MCF 10A (cell line): ENCODE measurements at regions of chr2 and their contacts with region 1.

Region 1: GRCh38 chr2:189096769-189097447 is 82.7 kb downstream of the COL5A2 start:
- DNase-seq: peak; percentile 42
- H3K4me3 Mint-ChIP-seq: no peak overlapping the region
- H3K27ac Mint-ChIP-seq: no peak overlapping the region
- H3K4me1 Mint-ChIP-seq: peaks cover 15% of the 10 kb centered on the region
- H3K27me3 Mint-ChIP-seq: no peaks in the 10 kb centered on the region
- CTCF ChIP-seq: no peak

Region 2: GRCh38 chr2:188884046-188884445 is 212.9 kb before region 1 on chr2:
- CTCF ChIA-PET with region 1: no interaction called
- POLR2A ChIA-PET with region 1: no interaction called
- intact Hi-C with region 1: no loop called
- DNase-seq: peak; percentile 25
- H3K4me3 Mint-ChIP-seq: no peak overlapping the region
- H3K27ac Mint-ChIP-seq: no peak overlapping the region
- H3K4me1 Mint-ChIP-seq: no peaks in the 10 kb centered on the region
- H3K27me3 Mint-ChIP-seq: no peaks in the 10 kb centered on the region
- CTCF ChIP-seq: no peak

Region 3: DNA sequence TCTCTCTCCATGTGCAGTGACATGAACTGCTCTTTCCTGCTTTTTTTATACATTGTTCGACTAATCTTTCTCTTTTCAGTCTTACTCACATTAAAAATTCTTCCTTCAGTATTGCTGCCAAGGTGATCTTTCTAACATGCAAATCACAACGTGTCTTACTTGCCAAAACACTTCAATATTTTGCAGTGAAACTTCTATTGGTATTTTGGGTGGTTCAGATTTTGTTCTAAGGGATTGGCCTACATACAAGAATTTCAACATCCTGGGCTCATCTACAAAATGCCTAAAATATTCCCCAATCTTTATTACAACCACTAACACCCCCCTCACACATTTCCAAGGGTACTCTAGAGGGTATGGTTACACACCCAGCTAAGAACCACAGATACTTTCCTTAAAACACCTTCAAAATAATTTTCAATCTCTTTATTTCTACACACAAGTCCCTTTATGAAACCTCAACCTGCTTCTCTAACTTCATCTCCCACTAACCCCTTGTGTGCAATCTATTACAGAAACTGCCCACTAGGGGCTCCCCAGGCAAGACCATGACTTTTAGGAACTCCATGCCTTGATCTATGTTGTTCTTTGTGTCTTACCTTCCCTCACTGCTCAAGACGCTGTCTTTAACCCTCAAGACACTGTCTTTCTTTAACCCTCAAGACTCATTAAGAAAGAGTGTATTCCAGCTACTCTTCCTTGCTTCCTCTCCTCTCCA is 71.8 kb before region 1 on chr2:
- CTCF ChIA-PET with region 1: no interaction called
- POLR2A ChIA-PET with region 1: no interaction called
- intact Hi-C with region 1: no loop called
- DNase-seq: peak; percentile 4
- H3K4me3 Mint-ChIP-seq: no peak overlapping the region
- H3K27ac Mint-ChIP-seq: peak overlapping the region; percentile 8
- H3K4me1 Mint-ChIP-seq: no peaks in the 10 kb centered on the region
- H3K27me3 Mint-ChIP-seq: no peaks in the 10 kb centered on the region
- CTCF ChIP-seq: peak; percentile 28

Region 4: GRCh38 chr2:189072036-189072435 is 24.9 kb before region 1 on chr2:
- CTCF ChIA-PET with region 1: interaction called, 11 read pairs
- POLR2A ChIA-PET with region 1: no interaction called
- intact Hi-C with region 1: no loop called
- DNase-seq: no peak
- H3K4me3 Mint-ChIP-seq: no peak overlapping the region
- H3K27ac Mint-ChIP-seq: no peak overlapping the region
- H3K4me1 Mint-ChIP-seq: no peaks in the 10 kb centered on the region
- H3K27me3 Mint-ChIP-seq: no peaks in the 10 kb centered on the region
- CTCF ChIP-seq: no peak

Region 5: GRCh38 chr2:189142893-189143759 is 46.2 kb after region 1 on chr2:
- CTCF ChIA-PET with region 1: interaction called, 15 read pairs
- POLR2A ChIA-PET with region 1: no interaction called
- intact Hi-C with region 1: no loop called
- DNase-seq: peak; percentile 74
- H3K4me3 Mint-ChIP-seq: no peak overlapping the region
- H3K27ac Mint-ChIP-seq: peak overlapping the region; percentile 97
- H3K4me1 Mint-ChIP-seq: peaks cover 17% of the 10 kb centered on the region
- H3K27me3 Mint-ChIP-seq: no peaks in the 10 kb centered on the region
- CTCF ChIP-seq: peak; percentile 75

Region 6: GRCh38 chr2:189347540-189347939 is 250.6 kb after region 1 on chr2:
- CTCF ChIA-PET with region 1: interaction called, 3 read pairs
- POLR2A ChIA-PET with region 1: no interaction called
- intact Hi-C with region 1: loop called (anchors 1 kb)
- DNase-seq: peak; percentile 85
- H3K4me3 Mint-ChIP-seq: no peak overlapping the region
- H3K27ac Mint-ChIP-seq: peak overlapping the region; percentile 55
- H3K4me1 Mint-ChIP-seq: peaks cover 17% of the 10 kb centered on the region
- H3K27me3 Mint-ChIP-seq: no peaks in the 10 kb centered on the region
- CTCF ChIP-seq: no peak

Region 7: DNA sequence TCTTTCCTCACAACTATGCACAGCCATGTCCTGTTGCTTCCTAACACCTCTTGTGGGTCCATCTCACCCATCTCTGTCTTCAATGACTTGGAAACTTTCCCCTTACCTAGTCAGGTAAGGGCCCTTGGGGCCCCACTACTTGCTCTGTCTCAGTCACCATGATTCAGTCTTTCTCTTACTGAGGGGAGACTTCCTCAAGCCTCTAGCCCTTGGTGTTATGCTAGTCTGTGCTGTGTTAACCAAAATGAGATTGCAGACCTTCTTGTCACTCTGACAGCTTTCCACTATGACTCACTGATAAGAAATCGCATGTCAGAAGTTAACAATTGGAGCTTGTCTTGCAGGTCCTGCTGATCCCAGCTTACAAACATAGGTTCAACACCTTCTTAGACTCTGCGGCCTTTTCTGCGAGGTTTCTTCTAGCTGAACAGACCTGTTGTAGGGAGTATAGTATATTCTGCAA is 409.6 kb after region 1 on chr2:
- CTCF ChIA-PET with region 1: no interaction called
- POLR2A ChIA-PET with region 1: no interaction called
- intact Hi-C with region 1: no loop called
- DNase-seq: no peak
- H3K4me3 Mint-ChIP-seq: no peak overlapping the region
- H3K27ac Mint-ChIP-seq: no peak overlapping the region
- H3K4me1 Mint-ChIP-seq: no peaks in the 10 kb centered on the region
- H3K27me3 Mint-ChIP-seq: no peaks in the 10 kb centered on the region
- CTCF ChIP-seq: no peak